ENCODE measurements at regions of chr11 and their contacts with region 1.

Region 1: GRCh38 chr11:57712256-57713150 is at the start of gene TMX2:
- DNase-seq: peak; percentile 88
- H3K4me3 Mint-ChIP-seq: peak within 1 kb of the TSS; percentile 97
- H3K27ac Mint-ChIP-seq: peak within 1 kb of the TSS; percentile 94
- H3K4me1 Mint-ChIP-seq: peaks cover 53% of the 10 kb centered on the region
- H3K27me3 Mint-ChIP-seq: no peaks in the 10 kb centered on the region
- total RNA-seq, gene TMX2: 95.9 and 96.8 TPM in 2 replicates

Region 2: DNA sequence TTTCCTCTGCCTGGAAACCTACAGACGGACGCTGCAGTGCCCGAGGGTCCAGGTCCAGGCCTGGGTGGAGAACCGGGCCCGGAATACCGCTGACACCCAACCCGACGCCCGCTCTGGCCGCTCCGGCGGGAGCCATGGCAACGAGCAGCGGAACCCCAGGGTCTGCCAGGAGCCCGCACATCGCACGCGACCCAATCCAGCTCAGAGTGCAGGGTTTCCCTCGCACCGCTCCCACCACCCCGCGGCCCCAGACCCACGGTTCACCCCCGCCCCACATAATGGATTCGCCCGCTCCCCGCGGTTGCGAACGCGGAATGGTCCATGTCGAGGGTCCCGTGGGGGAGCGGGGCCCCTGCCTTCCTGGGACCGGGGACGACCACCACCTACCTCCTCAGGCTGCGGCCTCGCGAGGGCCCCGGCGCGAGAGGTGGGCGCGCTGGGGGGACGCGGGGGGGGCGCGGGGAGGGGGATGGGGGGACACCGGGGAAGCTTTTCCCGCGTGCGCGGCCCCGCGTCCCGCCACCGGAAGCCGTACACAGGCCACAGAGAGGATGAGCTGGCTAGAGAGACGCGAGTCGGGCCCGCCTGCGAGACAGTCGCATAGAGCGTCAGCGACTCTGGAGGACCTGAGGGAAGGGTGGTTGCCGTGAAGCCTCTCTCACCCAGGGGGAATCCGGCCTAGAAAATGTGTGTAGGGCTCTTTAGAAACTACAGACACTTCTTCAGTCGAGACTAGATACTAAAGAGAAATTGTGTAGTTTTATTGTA is 377.0 kb before region 1 on chr11 and contains the start of gene SSRP1:
- intact Hi-C with region 1: loop called (anchors 1 kb)
- DNase-seq: peak; percentile 81
- H3K4me3 Mint-ChIP-seq: peak within 1 kb of the TSS; percentile 92
- H3K27ac Mint-ChIP-seq: peak within 1 kb of the TSS; percentile 99
- H3K4me1 Mint-ChIP-seq: peaks cover 39% of the 10 kb centered on the region
- H3K27me3 Mint-ChIP-seq: peaks cover 1% of the 10 kb centered on the region
- total RNA-seq, gene SSRP1: 235 and 239 TPM in 2 replicates

Region 3: GRCh38 chr11:57456960-57457642 is 255.4 kb before region 1 on chr11:
- intact Hi-C with region 1: loop called (anchors 1 kb)
- DNase-seq: peak; percentile 65
- H3K4me3 Mint-ChIP-seq: peak overlapping the region; percentile 72
- H3K27ac Mint-ChIP-seq: no peak overlapping the region
- H3K4me1 Mint-ChIP-seq: peaks cover 36% of the 10 kb centered on the region
- H3K27me3 Mint-ChIP-seq: peaks cover 53% of the 10 kb centered on the region

Region 4: DNA sequence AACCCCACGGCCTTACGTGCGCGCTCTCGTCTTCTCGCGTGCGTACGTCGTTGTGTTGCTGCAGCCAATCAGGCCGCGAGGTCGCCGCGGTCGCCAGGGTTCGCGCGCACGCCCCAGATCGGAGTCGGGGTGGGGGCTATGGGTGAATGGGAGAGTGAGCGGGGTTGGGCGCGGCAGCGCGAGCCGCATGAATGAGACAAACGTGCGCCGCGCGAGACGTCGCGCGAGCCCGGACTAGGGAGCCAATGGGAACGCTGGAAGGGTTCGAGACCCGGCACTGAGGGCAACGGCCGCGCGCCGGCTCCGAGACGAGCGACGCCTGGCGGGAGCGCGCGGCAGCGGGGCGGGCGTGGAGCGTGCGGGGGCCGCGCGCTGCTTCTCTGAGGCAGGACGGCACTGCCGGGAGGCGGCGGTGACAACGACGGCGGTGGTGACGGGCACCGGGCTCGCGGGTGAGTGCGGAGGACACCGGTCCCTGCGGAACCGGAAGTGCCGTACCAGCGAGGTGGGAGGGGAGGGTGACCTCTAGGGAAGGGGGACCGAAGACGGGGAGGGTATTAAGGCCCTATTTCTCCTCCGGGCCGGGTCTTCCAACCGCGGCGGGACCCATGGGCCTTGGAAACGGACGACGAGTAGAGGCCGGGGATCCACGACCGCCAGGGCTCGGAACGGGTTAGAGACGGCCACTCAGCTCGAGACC is 44.6 kb before region 1 on chr11 and contains the start of gene ZDHHC5:
- intact Hi-C with region 1: loop called (anchors 1 kb)
- DNase-seq: peak; percentile 99
- H3K4me3 Mint-ChIP-seq: peak within 1 kb of the TSS; percentile 99
- H3K27ac Mint-ChIP-seq: peak within 1 kb of the TSS; percentile 97
- H3K4me1 Mint-ChIP-seq: peaks cover 31% of the 10 kb centered on the region
- H3K27me3 Mint-ChIP-seq: no peaks in the 10 kb centered on the region
- total RNA-seq, gene ZDHHC5: 78.4 and 79.1 TPM in 2 replicates

Region 5: DNA sequence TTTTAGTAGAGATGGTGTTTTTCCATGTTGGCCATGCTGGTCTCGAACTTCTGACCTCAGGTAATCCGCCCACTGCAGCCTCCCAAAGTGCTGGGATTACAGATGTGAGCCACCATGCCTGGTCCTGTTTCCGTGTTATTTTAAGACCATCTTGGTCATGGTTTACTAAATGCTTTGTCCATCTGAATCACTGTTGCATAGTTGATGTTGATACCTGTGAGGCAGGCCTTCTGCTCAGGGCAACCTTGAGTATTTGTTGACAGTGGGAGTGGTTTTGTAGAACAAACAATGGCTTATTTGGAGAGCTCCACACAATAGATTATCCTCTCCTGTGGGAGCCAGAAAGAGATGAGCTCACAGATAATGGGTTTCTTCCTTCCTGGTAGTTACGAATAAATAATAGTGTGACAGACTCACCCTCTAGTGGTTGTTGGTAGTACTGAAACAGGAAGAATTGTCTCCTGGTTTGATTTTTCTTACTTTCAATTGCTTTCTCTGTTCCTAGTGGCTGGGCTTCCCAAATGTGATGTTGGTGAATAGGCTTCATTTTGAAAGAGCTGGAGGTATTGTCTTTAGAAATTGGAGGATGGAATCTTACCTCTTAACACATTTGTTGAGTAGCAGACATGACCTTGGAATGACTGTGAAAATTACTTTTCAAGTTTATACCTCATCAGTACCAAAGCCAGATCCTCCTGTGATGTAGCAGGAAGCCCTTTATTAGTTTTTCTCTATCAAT is 88.1 kb after region 1 on chr11:
- intact Hi-C with region 1: loop called (anchors 1 kb)
- DNase-seq: peak; percentile 13
- H3K4me3 Mint-ChIP-seq: no peak overlapping the region
- H3K27ac Mint-ChIP-seq: peak overlapping the region; percentile 26
- H3K4me1 Mint-ChIP-seq: peaks cover 23% of the 10 kb centered on the region
- H3K27me3 Mint-ChIP-seq: no peaks in the 10 kb centered on the region

Region 6: DNA sequence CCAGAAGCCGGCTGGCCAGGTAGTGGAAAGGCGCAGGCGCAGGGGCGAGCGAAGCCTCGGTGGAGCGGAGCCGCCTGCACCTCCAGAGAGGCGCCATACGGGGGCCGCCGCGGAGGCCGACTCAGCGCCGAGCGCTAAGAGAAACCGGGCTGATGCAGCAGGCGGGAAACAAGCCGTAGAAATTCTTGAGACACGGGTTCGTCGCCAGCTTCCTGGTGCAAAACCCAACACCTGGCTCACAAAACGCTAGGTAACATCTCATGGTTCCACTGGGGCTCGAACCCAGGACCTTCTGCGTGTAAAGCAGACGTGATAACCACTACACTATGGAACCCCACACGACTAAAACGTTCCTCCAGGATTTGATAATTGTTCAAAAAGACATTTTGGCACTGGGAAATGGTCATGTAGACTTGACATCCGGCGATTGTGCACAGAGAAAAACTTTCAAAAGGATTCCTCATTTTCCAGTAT is 1837.9 kb after region 1 on chr11:
- intact Hi-C with region 1: loop called (anchors 10 kb)
- DNase-seq: peak; percentile 82
- H3K4me3 Mint-ChIP-seq: peak overlapping the region; percentile 82
- H3K27ac Mint-ChIP-seq: peak overlapping the region; percentile 93
- H3K4me1 Mint-ChIP-seq: peaks cover 38% of the 10 kb centered on the region
- H3K27me3 Mint-ChIP-seq: peaks cover 19% of the 10 kb centered on the region

Measured in activated T-helper 1 cell treated with anti-CD3 and anti-CD28 coated beads, Interleukin-12 subunit alpha, Interleukin-12 subunit beta, Interleukin-2, Interleukin-4 antibody, amounts not matched to agents 30 ng/mL and 10 ng/mL and 1 ng/mL, durations not matched to agents 14 hours and 24 hours and 36 hours (primary cell).